Kidney (tissue), 22 donors: ENCODE measurements at regions of chr3 and their contacts with region 1.

Region 1: GRCh38 chr3:32743934-32744333 is 58.9 kb downstream of the CNOT10 start:
- DNase-seq: peak in 2 of 5 donors; percentile 46 to 73
- H3K4me3 ChIP-seq: no peak overlapping the region
- H3K27ac ChIP-seq: no peak overlapping the region
- H3K4me1 ChIP-seq: no peaks in the 10 kb centered on the region
- H3K27me3 ChIP-seq: no peaks in the 10 kb centered on the region
- CTCF ChIP-seq: no peak

Region 2: DNA sequence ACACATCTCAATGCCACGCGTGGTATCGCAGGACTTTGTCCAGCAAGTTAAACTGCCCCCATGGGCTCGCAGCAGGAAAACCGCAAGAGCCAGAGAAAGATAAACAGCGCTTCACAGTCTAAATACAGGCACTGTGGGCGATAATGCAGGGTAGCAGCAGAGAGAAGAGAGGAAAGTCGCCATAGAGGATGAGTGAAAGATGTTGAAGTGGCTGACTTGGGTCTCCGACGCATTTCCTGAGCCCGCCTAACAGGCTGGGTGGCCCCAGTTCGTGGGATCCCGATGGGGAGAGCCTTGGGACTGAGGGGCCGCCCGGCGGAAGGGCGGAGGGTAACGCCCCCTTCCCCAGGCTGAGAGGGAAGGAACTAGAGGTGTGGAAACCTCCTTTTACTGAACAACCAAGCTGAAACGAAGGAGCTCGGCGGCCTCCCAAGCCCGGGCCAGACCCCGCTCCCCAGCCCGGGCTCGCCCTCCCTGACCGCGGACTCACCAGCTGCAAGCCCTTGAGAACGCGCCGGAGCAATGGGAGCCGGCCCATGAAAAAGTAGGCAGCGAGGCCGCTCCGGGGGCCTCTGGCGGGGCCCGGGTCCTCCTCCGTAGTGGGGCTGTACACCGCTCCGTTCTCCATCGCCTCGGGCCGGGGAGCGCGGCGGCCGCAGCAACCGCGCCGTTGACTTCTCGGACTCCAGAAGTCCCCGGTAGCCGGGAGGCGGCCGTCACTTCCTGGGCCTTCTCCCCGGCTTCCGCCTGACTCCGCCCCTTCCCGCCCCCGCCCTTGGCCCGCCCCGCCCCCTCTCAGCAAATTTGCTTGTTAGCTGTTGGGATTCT is 241.6 kb before region 1 on chr3 and contains the start of gene CMTM6:
- intact Hi-C with region 1: no loop called
- DNase-seq: peak; percentile 90 to 95 (median 93)
- H3K4me3 ChIP-seq: peak within 1 kb of the TSS; percentile 90 to 98 (median 96)
- H3K27ac ChIP-seq: peak within 1 kb of the TSS; percentile 87 to 90
- H3K4me1 ChIP-seq: peaks cover 0 to 3% (median 0%) of the 10 kb centered on the region in 3 donors
- H3K27me3 ChIP-seq: no peaks in the 10 kb centered on the region
- CTCF ChIP-seq: no peak
- total RNA-seq, gene CMTM6: 63.3 TPM

Region 3: DNA sequence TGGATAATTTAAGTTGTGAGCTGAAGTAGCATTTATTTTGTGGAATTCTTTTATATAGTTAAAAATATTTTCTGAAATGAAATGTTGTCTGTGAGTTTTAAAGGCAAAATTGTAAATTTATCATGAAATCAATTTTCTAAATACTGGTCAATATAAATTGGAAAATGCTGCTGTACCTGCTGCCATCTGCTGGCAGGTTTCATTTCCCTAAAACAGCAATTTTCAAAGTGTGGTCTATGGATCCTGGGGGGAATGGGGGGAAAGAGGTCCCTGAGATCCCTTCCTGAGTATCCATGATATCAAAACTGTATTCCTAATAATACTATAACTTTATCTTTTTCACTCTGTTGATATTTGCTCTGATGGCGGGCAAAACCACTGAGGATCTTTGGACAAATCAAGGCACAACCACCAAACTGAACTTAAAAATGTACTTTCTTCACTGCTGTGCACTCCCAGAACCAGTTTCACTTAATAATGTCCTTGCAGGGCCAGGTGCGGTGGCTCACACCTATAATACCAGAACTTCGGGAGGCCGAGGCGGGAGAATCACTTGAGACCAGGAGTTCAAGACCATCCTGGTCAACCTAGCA is 190.3 kb after region 1 on chr3:
- intact Hi-C with region 1: loop called (anchors 10 kb)
- DNase-seq: peak in 2 of 5 donors; percentile 17 to 49
- H3K4me3 ChIP-seq: no peak overlapping the region
- H3K27ac ChIP-seq: no peak overlapping the region
- H3K4me1 ChIP-seq: no peaks in the 10 kb centered on the region
- H3K27me3 ChIP-seq: no peaks in the 10 kb centered on the region
- CTCF ChIP-seq: peak; percentile 72